ENCODE measurements at regions of chr2 and their contacts with region 1.

Region 1: GRCh38 chr2:224585205-224586088 is at the start of gene CUL3:
- DNase-seq: peak; percentile 98 to 100 (median 99)
- ATAC-seq: peak; percentile 96
- H3K4me3 ChIP-seq: peak within 1 kb of the TSS; percentile 93
- H3K4me3 Mint-ChIP-seq: peak within 1 kb of the TSS; percentile 84 to 100 (median 98)
- H3K27ac ChIP-seq: peak within 1 kb of the TSS; percentile 92
- H3K27ac Mint-ChIP-seq: peak within 1 kb of the TSS; percentile 85 to 98 (median 93)
- H3K4me1 ChIP-seq: peaks cover 22 to 28% of the 10 kb centered on the region in 2 donors
- H3K4me1 Mint-ChIP-seq: peaks cover 9 to 50% (median 45%) of the 10 kb centered on the region in 7 donors
- H3K27me3 ChIP-seq: no peaks in the 10 kb centered on the region
- H3K27me3 Mint-ChIP-seq: no peaks in the 10 kb centered on the region
- total RNA-seq, gene CUL3: 70.5 to 97.0 (median 87.8) TPM

Region 2: DNA sequence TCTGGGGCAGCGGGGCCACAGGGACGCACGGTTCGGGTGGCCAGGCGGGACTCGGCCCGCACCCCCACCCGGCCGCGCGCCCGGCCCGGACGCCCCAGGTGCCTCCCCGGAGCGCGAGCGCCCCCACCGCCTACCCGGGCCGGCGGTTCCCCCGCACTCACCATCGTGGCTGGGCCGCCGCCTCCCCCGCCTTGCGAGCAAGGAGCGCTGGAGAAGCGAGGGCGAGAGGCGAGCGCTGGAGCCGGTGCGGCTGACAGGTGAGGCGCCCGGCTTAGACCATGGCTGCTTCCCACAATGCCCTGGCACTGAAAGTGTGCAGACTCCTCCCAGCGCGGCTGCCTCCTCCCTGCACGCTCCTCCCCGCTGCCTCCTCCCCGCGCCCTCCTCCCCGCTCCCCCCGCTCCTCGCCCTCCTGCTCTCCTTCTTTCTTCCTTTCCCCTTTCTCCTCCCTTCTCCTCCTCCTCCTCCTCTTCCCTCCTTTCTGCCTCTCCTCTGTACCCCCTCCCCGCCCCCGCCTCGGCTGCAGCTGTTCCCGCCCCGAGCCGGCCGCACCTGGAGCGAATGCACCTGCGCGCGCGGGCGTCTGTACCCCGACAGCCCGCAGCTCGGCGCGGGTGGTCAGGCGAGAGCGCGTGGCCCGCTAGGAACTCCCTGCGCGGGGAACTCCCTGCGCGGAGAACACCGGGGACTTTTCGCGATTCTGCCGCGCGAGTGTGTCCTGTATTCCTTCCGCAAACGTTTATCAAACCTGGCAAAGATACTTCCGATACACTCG is 748.0 kb before region 1 on chr2 and contains the start of gene AP1S3:
- CTCF ChIA-PET with region 1: no interaction called
- POLR2A ChIA-PET with region 1: no interaction called
- intact Hi-C with region 1: loop called in 1 of 2 experiments (anchors 5 kb)
- DNase-seq: peak; percentile 30 to 75 (median 58)
- ATAC-seq: peak; percentile 88
- H3K4me3 ChIP-seq: peak within 1 kb of the TSS; percentile 69
- H3K4me3 Mint-ChIP-seq: peak within 1 kb of the TSS; percentile 87 to 97 (median 94)
- H3K27ac ChIP-seq: peak within 1 kb of the TSS; percentile 60
- H3K27ac Mint-ChIP-seq: peak within 1 kb of the TSS; percentile 36 to 84 (median 76)
- H3K4me1 ChIP-seq: no peaks in the 10 kb centered on the region
- H3K4me1 Mint-ChIP-seq: peaks cover 0 to 20% (median 12%) of the 10 kb centered on the region in 7 donors
- H3K27me3 ChIP-seq: no peaks in the 10 kb centered on the region
- H3K27me3 Mint-ChIP-seq: no peaks in the 10 kb centered on the region
- total RNA-seq, gene AP1S3: 0.54 to 8.2 (median 1.6) TPM

Region 3: GRCh38 chr2:224401641-224402342 is 183.7 kb before region 1 on chr2 and contains the start of gene FAM124B:
- CTCF ChIA-PET with region 1: no interaction called
- POLR2A ChIA-PET with region 1: no interaction called
- intact Hi-C with region 1: loop called in 1 of 2 experiments (anchors 2 kb)
- DNase-seq: peak; percentile 14 to 44 (median 27)
- ATAC-seq: peak; percentile 80
- H3K4me3 ChIP-seq: peak within 1 kb of the TSS; percentile 4
- H3K4me3 Mint-ChIP-seq: peak within 1 kb of the TSS; percentile 64 to 84 (median 78)
- H3K27ac ChIP-seq: no peak within 1 kb of the TSS
- H3K27ac Mint-ChIP-seq: peak within 1 kb of the TSS in 5 of 9 donors; percentile 8 to 88 (median 84)
- H3K4me1 ChIP-seq: no peaks in the 10 kb centered on the region
- H3K4me1 Mint-ChIP-seq: peaks cover 0 to 22% (median 15%) of the 10 kb centered on the region in 7 donors
- H3K27me3 ChIP-seq: no peaks in the 10 kb centered on the region
- H3K27me3 Mint-ChIP-seq: peaks cover 0 to 11% (median 5%) of the 10 kb centered on the region in 5 donors
- total RNA-seq, gene FAM124B: 0.48 to 2.1 (median 1.3) TPM in 3 of 5 experiments, not detected in the others

Region 4: DNA sequence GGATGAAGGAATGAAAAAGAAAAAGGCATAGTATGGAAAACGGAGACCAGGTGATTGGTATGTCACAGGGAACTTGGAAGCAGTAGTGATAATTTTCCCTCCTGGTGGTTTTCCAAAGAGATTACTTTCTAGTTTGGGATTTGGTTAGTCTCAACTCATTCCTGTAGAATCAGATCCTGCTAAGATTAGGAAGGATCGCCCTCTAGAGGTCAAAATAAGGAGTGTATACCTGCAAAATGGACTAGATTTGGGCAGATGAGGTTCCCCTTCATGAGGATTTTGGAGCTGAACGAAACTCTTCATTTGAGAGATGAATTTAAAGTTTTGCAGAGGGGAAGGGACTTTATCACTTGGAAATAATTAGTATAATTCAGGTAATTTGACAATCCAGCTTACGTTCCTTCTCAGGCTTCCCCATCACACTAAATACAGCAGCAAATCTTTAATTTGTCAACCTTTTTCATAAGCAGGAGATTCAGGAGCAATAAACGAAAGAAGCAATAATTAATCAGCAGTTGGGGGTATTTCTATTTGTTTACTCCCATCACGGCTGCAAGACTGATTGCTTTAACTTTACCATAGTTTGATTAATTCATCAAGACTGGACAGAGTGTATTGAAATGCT is 65.5 kb after region 1 on chr2:
- CTCF ChIA-PET with region 1: interaction called, 4 read pairs
- POLR2A ChIA-PET with region 1: no interaction called
- intact Hi-C with region 1: loop called in 1 of 2 experiments (anchors 2 kb)
- DNase-seq: peak in 7 of 9 donors; percentile 12 to 57 (median 47)
- ATAC-seq: peak; percentile 72
- H3K4me3 ChIP-seq: no peak overlapping the region
- H3K4me3 Mint-ChIP-seq: no peak overlapping the region
- H3K27ac ChIP-seq: no peak overlapping the region
- H3K27ac Mint-ChIP-seq: no peak overlapping the region
- H3K4me1 ChIP-seq: no peaks in the 10 kb centered on the region
- H3K4me1 Mint-ChIP-seq: peaks cover 0 to 11% (median 5%) of the 10 kb centered on the region in 7 donors
- H3K27me3 ChIP-seq: no peaks in the 10 kb centered on the region
- H3K27me3 Mint-ChIP-seq: peaks cover 0 to 7% (median 0%) of the 10 kb centered on the region in 5 donors

Region 5: DNA sequence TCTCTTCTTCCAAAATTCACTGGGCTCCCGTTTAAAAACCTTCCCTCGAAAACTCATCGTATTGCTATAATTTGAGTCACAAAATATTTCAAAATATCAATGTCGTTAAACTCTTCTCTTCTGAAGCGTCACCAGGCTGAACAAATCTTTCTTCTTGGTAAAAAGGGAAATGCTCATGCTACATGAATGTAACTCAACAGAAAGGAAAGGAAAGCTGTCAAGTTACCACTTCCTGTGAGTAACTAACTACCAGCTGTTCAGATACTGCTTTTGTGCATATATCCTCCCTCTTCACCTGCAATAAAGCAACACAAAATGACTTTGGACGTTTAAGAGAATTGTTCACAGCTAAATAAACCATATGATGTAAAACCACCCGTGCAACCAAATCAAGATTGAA is 361.4 kb after region 1 on chr2:
- CTCF ChIA-PET with region 1: no interaction called
- POLR2A ChIA-PET with region 1: no interaction called
- intact Hi-C with region 1: loop called in 1 of 2 experiments (anchors 10 kb)
- DNase-seq: peak in 7 of 9 donors; percentile 60 to 82 (median 77)
- ATAC-seq: peak; percentile 90
- H3K4me3 ChIP-seq: peak overlapping the region; percentile 59
- H3K4me3 Mint-ChIP-seq: peak overlapping the region; percentile 79 to 99 (median 91)
- H3K27ac ChIP-seq: peak overlapping the region; percentile 84
- H3K27ac Mint-ChIP-seq: peak overlapping the region; percentile 68 to 98 (median 92)
- H3K4me1 ChIP-seq: peaks cover 52 to 69% of the 10 kb centered on the region in 2 donors
- H3K4me1 Mint-ChIP-seq: peaks cover 54 to 91% (median 79%) of the 10 kb centered on the region in 7 donors
- H3K27me3 ChIP-seq: no peaks in the 10 kb centered on the region
- H3K27me3 Mint-ChIP-seq: no peaks in the 10 kb centered on the region

Measured in naive thymus-derived CD4-positive, alpha-beta T cell (primary cell).